K562 (cell line): ENCODE measurements at regions of chr5 and their contacts with region 1.

Region 1: DNA sequence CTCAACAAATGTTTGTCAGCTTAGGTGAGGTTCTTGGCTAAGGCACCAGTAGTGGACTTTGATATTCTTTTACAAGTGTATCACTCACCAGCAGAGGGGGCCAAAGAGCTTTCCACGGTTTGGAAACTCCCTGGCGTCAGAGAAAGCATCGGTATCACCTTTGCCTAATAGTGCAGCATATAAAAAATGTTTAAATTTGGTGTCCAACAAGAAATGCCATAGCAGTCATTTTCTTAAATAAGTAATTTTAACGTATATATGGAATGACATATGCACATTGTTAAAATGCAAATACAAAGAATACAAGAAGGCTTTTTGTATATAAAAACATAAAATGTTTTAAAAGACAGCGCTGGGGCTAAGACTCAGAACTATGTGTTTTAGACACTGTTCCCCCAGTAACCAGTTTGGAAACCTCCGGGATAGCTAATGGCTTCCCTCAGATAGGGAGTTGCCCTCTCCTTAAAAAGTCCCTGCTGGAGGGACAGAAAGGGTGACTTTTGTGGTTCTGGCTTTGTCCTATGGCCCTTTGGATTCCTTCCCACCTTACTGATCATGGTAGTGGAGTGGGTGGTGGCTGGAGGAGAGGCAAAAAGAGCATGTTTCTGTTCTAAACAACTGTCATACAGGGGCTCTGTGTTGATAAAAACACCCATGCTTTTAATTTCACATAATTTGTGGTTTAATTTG is 124.6 kb downstream of the GPBP1 start:
- DNase-seq: peak; percentile 55 to 81 (median 62)
- ATAC-seq: peak; percentile 94
- H3K4me3 ChIP-seq: no peak overlapping the region
- H3K27ac ChIP-seq: no peak overlapping the region
- H3K4me1 ChIP-seq: no peaks in the 10 kb centered on the region
- H3K27me3 ChIP-seq: no peaks in the 10 kb centered on the region
- CTCF ChIP-seq: peak; percentile 68 to 83 (median 82)
- EP300 ChIP-seq: no peak
- POLR2A ChIP-seq: no peak
- RAD21 ChIP-seq: peak; percentile 80 to 86

Region 2: DNA sequence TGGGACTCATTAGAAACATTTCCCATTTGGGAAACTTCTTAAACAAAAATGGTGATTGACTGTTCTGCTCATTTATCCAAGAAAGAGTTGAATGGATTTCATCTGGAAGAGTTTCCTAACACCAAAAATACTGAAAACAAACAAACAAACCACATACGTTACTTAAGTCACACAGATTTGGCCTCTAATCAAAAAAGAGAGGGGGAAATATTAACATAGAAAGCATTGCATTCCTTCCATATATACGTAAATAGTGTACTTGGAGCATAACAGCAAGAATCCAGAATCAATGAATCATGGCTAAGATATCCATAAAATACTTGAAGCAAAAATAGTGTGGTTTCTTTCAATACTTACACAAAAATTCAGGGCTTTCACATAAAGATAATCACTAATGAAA is 672.9 kb before region 1 on chr5:
- CTCF ChIA-PET with region 1: no interaction called
- POLR2A ChIA-PET with region 1: no interaction called
- in situ Hi-C with region 1: no loop called
- intact Hi-C with region 1: no loop called
- DNase-seq: no peak
- ATAC-seq: no peak
- H3K4me3 ChIP-seq: no peak overlapping the region
- H3K27ac ChIP-seq: no peak overlapping the region
- H3K4me1 ChIP-seq: no peaks in the 10 kb centered on the region
- H3K27me3 ChIP-seq: no peaks in the 10 kb centered on the region
- CTCF ChIP-seq: no peak
- EP300 ChIP-seq: no peak
- POLR2A ChIP-seq: no peak
- RAD21 ChIP-seq: no peak

Region 3: DNA sequence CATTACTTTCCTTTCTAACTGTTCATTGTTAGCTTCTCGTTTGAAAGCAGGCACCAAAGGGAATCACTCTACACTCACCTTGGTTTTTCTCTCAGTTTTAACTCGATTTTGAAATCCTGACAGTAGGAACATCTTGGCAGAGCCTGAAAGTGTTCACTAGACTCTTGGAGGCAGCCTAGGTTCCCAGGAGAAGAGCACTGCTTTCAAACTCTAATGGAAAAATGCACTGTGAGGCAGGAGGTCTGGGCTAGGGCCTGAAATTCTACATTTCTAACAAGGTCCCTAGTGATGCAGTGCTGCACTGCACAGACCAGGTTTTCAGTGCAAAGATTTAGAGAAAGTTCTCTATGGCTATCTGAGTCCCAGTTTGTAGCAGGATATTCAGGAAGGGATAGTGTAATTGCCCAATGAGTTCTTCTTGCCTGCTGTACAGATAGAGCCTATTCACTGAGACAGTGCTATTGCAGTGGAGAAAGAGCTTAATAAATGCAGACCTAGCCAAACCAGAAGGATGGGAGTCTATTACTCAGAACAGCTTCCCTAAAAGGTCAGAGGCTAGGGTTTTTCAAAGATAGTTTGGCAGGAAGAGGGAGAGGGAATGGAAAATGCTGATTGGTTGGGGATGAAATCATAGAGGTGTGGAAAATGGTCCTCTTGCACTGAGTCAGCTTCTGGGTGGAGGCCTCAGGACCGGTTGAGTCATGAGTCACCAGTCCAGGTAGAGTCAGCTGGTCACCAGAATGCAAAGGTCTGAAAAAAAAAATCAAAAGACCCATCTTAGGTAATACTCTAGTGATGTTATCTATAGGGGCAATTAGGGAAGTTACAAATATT is 29.3 kb after region 1 on chr5:
- CTCF ChIA-PET with region 1: no interaction called
- POLR2A ChIA-PET with region 1: no interaction called
- in situ Hi-C with region 1: no loop called
- intact Hi-C with region 1: no loop called
- DNase-seq: no peak
- ATAC-seq: no peak
- H3K4me3 ChIP-seq: no peak overlapping the region
- H3K27ac ChIP-seq: no peak overlapping the region
- H3K4me1 ChIP-seq: no peaks in the 10 kb centered on the region
- H3K27me3 ChIP-seq: peaks cover 3 to 4% of the 10 kb centered on the region in 2 experiments; a peak in 4 of 5 replicates
- CTCF ChIP-seq: no peak
- EP300 ChIP-seq: no peak
- POLR2A ChIP-seq: no peak
- RAD21 ChIP-seq: no peak

Region 4: GRCh38 chr5:57338068-57338892 is 39.8 kb after region 1 on chr5:
- CTCF ChIA-PET with region 1: no interaction called
- POLR2A ChIA-PET with region 1: no interaction called
- in situ Hi-C with region 1: no loop called
- intact Hi-C with region 1: loop called (anchors 5 kb)
- DNase-seq: peak; percentile 32 to 67 (median 44)
- ATAC-seq: peak; percentile 98
- H3K4me3 ChIP-seq: no peak overlapping the region
- H3K27ac ChIP-seq: no peak overlapping the region
- H3K4me1 ChIP-seq: no peaks in the 10 kb centered on the region
- H3K27me3 ChIP-seq: no peaks in the 10 kb centered on the region
- CTCF ChIP-seq: peak; percentile 69 to 72 (median 71)
- EP300 ChIP-seq: no peak
- POLR2A ChIP-seq: no peak
- RAD21 ChIP-seq: peak; percentile 68 to 82

Region 5: DNA sequence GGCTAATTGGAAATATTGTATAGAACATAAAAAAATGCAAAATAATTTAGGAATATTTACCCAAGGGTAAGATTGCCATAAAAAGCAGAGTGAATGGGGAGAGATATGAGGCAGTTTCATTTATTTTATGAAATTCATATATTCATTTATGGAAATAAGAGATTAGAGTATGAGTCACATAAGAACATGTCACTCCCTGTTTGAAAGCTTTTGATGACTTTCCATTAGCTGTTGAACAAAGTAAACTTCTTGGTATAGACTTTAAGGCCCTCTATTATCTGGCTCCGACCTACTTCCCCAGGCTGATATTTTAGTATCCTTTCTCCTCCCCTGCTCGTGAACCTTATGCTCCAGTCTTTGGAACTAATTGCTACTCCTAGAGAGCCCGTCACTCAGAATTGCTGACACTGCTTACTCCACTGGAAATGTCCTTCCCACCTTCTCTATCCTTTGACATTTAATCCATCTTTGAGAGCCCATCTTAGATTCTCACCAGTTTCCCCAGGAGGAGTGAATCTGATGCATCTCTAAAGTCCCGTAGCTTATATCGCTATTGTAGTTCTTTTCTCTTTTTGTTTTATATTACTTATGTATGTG is 193.0 kb after region 1 on chr5:
- CTCF ChIA-PET with region 1: no interaction called
- POLR2A ChIA-PET with region 1: no interaction called
- in situ Hi-C with region 1: no loop called
- intact Hi-C with region 1: loop called (anchors 2 kb)
- DNase-seq: peak in 2 of 4 experiments; percentile 3 to 16
- ATAC-seq: no peak
- H3K4me3 ChIP-seq: no peak overlapping the region
- H3K27ac ChIP-seq: no peak overlapping the region
- H3K4me1 ChIP-seq: peaks cover 0 to 19% of the 10 kb centered on the region in 2 experiments; a peak in 4 of 5 replicates
- H3K27me3 ChIP-seq: no peaks in the 10 kb centered on the region
- CTCF ChIP-seq: no peak
- EP300 ChIP-seq: no peak
- POLR2A ChIP-seq: no peak
- RAD21 ChIP-seq: no peak

Region 6: DNA sequence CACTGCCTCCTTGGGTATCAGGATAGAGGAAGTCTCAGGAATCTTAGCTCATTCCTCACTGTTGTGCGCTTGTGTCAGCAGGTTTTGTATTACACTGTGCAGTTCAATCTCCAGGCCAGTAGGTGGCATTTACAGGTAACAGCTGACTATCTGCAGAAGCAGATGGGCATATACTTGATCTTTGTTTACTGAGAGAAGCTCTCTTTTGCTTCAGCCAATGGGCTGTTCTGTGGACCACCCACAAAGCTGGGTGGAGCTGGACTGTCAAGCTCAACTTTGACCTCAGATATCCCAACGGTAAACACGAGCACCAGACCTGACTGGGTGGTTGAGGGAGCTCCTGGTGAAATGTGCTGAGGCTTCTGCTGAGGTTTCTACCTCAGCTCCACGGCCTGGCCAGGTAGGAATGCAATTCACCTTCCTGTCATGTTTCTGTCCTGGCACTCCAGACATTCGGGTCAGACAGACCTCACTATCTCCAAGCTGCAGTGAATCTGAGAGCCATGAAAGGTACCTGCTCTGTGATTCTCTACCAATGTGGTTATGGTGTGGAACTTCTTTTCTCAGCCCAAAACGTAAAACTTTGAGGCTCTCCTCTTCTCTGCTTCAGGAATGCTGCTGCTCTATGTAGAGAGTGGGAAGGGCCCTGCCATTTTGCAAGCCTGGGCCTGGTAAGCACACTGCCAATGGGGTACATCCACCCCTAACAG is 352.1 kb after region 1 on chr5:
- CTCF ChIA-PET with region 1: no interaction called
- POLR2A ChIA-PET with region 1: no interaction called
- in situ Hi-C with region 1: no loop called
- intact Hi-C with region 1: loop called (anchors 10 kb)
- DNase-seq: peak; percentile 37 to 64 (median 54)
- ATAC-seq: peak; percentile 94
- H3K4me3 ChIP-seq: no peak overlapping the region
- H3K27ac ChIP-seq: no peak overlapping the region
- H3K4me1 ChIP-seq: no peaks in the 10 kb centered on the region
- H3K27me3 ChIP-seq: no peaks in the 10 kb centered on the region
- CTCF ChIP-seq: peak; percentile 60 to 78 (median 72)
- EP300 ChIP-seq: no peak
- POLR2A ChIP-seq: no peak
- RAD21 ChIP-seq: peak; percentile 43 to 78

Region 7: DNA sequence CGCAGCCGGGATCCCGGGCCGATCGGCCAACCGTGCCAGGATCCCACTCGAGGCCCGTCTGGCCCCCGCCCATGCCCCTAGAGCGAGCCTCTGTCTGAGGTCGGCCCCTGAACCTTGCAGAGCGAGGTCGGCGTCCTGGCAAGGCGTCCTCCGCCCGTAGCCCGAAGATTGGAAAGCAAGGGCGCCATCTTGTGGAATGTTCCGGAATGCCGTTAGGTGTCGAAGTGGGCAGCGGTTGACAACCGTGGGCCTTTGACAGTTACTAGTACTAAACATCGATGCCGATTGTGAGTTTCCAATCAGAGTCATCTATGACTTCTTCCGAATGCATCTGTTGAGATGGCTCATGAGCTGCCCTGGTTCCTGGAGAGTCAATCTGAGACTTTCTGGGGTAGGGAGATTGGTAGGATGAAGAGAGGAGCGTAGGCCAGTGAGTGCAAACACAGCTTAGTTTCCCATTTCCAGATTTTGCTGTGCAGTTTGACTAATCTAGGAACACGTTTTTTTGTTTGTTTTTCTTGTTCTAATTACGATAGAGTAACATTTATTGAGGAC is 1162.4 kb after region 1 on chr5:
- CTCF ChIA-PET with region 1: interaction called, 49 read pairs
- POLR2A ChIA-PET with region 1: no interaction called
- in situ Hi-C with region 1: loop called (anchors 10 kb)
- intact Hi-C with region 1: loop called (anchors 1 kb)
- DNase-seq: peak; percentile 19 to 33 (median 23)
- ATAC-seq: peak; percentile 82
- H3K4me3 ChIP-seq: no peak overlapping the region
- H3K27ac ChIP-seq: no peak overlapping the region
- H3K4me1 ChIP-seq: peaks cover 0 to 12% of the 10 kb centered on the region in 2 experiments; a peak in 1 of 5 replicates
- H3K27me3 ChIP-seq: no peaks in the 10 kb centered on the region
- CTCF ChIP-seq: peak; percentile 56 to 62 (median 60)
- EP300 ChIP-seq: no peak
- POLR2A ChIP-seq: no peak
- RAD21 ChIP-seq: peak; percentile 52 to 79